CD4-positive, alpha-beta memory T cell (primary cell): ENCODE measurements at regions of chr17 and their contacts with region 1.

Region 1: GRCh38 chr17:7394452-7395191 is at the start of gene PLSCR3:
- DNase-seq: peak; percentile 76 to 88 (median 83)
- H3K4me3 ChIP-seq: peak within 1 kb of the TSS; percentile 78 to 94
- H3K4me3 Mint-ChIP-seq: peak within 1 kb of the TSS; percentile 93 to 97 (median 96)
- H3K27ac ChIP-seq: peak within 1 kb of the TSS; percentile 91
- H3K27ac Mint-ChIP-seq: peak within 1 kb of the TSS; percentile 92 to 98 (median 94)
- H3K4me1 ChIP-seq: peaks cover 44% of the 10 kb centered on the region
- H3K4me1 Mint-ChIP-seq: peaks cover 13 to 44% (median 31%) of the 10 kb centered on the region in 4 donors
- H3K27me3 ChIP-seq: no peaks in the 10 kb centered on the region
- H3K27me3 Mint-ChIP-seq: no peaks in the 10 kb centered on the region
- total RNA-seq, gene PLSCR3: 90.3 to 91.9 TPM

Region 2: DNA sequence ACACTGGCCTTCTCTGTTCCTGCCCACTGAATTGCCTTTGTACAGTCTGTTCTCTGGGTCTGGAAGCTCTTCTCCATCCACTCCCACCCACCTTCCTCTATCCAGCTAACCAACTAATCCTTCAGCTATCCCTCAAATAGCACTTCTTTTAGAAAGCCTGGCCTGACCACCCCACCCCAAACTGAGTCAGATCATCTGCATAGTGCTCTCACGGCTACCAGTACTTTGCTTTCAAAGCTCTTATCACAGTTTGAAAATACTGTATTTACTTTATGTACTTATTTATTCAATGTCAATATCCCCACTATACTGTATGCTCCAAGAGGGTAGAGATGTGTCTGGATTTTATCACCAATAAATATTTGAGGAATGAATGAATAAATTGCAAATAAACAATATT is 127.8 kb before region 1 on chr17:
- CTCF ChIA-PET with region 1: no interaction called
- POLR2A ChIA-PET with region 1: no interaction called
- intact Hi-C with region 1: no loop called
- DNase-seq: no peak
- H3K4me3 ChIP-seq: no peak overlapping the region
- H3K4me3 Mint-ChIP-seq: no peak overlapping the region
- H3K27ac ChIP-seq: no peak overlapping the region
- H3K27ac Mint-ChIP-seq: no peak overlapping the region
- H3K4me1 ChIP-seq: peaks cover 20% of the 10 kb centered on the region
- H3K4me1 Mint-ChIP-seq: peaks cover 13 to 23% (median 19%) of the 10 kb centered on the region in 4 donors
- H3K27me3 ChIP-seq: no peaks in the 10 kb centered on the region
- H3K27me3 Mint-ChIP-seq: peaks cover 7 to 15% of the 10 kb centered on the region in 2 donors

Region 3: DNA sequence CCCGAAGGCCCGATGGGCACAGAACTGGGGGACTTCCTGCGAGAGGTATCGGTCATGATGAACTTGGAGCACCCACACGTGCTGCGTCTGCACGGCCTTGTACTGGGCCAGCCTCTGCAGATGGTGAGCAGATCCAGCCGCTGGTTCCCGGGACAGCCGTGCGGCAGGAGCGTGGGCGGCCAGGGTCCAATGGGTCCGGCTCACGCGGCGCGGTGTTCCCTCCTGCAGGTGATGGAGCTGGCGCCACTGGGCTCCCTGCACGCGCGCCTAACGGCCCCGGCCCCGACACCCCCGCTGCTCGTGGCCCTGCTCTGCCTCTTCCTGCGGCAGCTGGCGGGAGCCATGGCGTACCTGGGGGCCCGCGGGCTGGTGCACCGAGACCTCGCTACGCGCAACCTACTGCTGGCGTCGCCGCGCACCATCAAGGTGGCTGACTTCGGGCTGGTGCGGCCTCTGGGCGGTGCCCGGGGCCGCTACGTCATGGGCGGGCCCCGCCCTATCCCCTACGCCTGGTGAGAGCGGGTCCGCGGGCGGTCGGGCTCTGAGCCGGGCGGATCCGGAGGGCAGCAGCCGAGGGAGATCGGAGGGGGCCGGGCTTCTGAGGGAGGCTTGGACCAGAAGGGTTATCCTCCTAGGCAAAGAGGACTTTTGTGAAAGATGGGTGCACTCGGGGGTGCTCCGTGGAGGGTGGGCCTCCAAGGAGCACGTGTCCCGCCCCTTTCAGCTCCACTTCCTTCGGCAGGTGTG is 10.7 kb before region 1 on chr17:
- CTCF ChIA-PET with region 1: no interaction called
- POLR2A ChIA-PET with region 1: interaction called, 57 read pairs
- intact Hi-C with region 1: loop called (anchors 1 kb)
- DNase-seq: peak; percentile 82 to 87 (median 84)
- H3K4me3 ChIP-seq: peak overlapping the region; percentile 42 to 86
- H3K4me3 Mint-ChIP-seq: peak overlapping the region; percentile 80 to 87 (median 82)
- H3K27ac ChIP-seq: peak overlapping the region; percentile 72
- H3K27ac Mint-ChIP-seq: peak overlapping the region; percentile 88 to 97 (median 94)
- H3K4me1 ChIP-seq: peaks cover 16% of the 10 kb centered on the region
- H3K4me1 Mint-ChIP-seq: peaks cover 8 to 28% (median 13%) of the 10 kb centered on the region in 4 donors
- H3K27me3 ChIP-seq: peaks cover 9% of the 10 kb centered on the region
- H3K27me3 Mint-ChIP-seq: peaks cover 28 to 32% of the 10 kb centered on the region in 2 donors

Region 4: DNA sequence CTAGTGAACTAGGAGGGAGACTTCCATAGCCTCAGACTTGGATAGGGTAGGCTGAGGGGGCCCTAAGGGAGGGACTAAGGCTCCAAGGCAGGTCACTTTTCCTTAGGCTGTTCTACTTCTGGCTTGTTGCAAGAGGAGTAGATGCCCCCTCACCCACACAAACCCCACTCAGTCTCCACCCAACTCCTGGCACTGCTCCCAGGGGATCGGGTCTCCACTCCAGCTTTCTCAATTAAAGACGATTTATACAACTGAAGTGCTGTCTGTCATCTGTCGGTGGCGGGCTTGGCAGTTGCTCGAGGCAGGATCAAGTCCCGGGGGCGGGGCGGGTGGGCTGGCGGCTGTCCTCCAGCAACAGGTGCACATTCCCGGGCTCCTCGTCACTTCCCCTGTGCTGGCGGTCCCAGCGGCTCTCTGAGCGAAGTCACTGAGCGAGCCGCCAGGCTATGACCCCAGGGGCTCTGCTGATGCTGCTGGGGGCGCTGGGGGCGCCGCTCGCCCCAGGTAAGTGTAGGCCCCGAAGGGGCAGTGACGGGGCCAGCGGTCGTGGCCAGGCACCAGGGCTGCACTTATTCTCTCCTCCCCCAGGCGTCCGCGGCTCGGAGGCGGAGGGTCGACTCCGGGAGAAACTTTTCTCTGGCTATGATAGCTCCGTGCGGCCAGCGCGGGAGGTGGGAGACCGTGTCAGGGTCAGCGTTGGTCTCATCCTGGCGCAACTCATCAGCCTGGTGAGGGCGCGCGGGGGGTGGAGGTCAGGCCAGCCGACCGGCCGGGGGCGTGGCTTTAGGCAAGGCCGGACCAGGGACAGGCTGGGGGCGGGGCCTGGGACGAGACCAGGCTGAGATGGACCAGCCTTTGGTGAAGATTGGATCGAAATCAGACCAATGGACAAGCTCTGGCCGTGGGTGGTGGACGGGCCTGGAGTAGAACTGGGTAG is 50.3 kb after region 1 on chr17 and contains the start of gene CHRNB1:
- CTCF ChIA-PET with region 1: no interaction called
- POLR2A ChIA-PET with region 1: no interaction called
- intact Hi-C with region 1: no loop called
- DNase-seq: peak in 1 of 5 donors; percentile 16
- H3K4me3 ChIP-seq: peak within 1 kb of the TSS in 1 of 2 donors; percentile 11
- H3K4me3 Mint-ChIP-seq: peak within 1 kb of the TSS; percentile 75 to 88 (median 83)
- H3K27ac ChIP-seq: no peak within 1 kb of the TSS
- H3K27ac Mint-ChIP-seq: peak within 1 kb of the TSS in 5 of 7 donors; percentile 29 to 76 (median 57)
- H3K4me1 ChIP-seq: peaks cover 31% of the 10 kb centered on the region
- H3K4me1 Mint-ChIP-seq: peaks cover 11 to 40% (median 28%) of the 10 kb centered on the region in 4 donors
- H3K27me3 ChIP-seq: peaks cover 45% of the 10 kb centered on the region
- H3K27me3 Mint-ChIP-seq: peaks cover 39 to 58% of the 10 kb centered on the region in 2 donors
- total RNA-seq, gene CHRNB1: 9.1 to 9.5 TPM